Activated naive CD4-positive, alpha-beta T cell treated with anti-CD3 and anti-CD28 coated beads for 36 hours (primary cell): ENCODE measurements at regions of chr7 and their contacts with region 1.

Region 1: GRCh38 chr7:66654123-66654732 is 25.5 kb downstream of the KCTD7 start:
- DNase-seq: peak; percentile 98
- H3K4me3 Mint-ChIP-seq: peak overlapping the region; percentile 95
- H3K27ac Mint-ChIP-seq: peak overlapping the region; percentile 95
- H3K4me1 Mint-ChIP-seq: peaks cover 30% of the 10 kb centered on the region
- H3K27me3 Mint-ChIP-seq: no peaks in the 10 kb centered on the region

Region 2: DNA sequence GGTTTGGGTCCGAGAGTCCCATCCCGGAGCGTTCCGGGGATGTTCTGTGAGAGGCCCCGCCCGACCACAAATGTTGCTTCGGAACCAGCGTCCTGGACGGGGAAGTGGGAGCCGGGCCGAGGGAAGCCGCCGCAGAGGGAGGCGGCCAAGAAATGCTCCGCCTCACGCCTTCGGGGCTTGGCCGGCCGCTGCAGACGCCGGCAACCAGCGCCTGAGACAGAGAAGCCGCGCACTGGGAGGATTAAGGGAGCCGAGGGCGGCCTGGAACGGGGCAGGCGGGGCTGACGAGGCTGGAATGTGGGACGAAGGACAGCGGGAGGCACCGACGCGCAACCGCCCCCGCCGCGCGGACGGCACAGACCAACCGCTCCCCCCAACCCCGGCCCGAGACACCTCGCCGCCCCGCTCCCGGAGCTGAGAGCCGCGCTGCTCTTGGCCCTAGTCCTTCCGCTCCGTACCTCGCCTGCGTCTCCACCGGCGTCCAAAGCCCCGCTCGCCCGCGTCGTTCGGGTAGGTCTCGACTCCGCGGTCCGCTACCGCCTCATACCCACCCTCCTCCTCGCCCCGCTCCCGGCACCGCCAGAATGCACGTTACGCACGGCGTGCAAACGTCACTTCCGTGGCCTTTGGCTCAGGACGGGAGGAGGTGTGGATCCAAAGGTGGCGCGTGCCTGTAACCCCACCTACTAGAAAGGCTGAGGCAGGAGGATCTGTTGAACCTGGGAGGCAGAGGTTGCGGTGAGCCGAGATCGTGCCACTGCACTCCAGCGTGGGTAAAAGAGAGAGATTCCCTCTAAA is 62.2 kb before region 1 on chr7:
- CTCF ChIA-PET with region 1: interaction called, 3 read pairs
- intact Hi-C with region 1: loop called (anchors 1 kb)
- DNase-seq: peak; percentile 96
- H3K4me3 Mint-ChIP-seq: peak overlapping the region; percentile 98
- H3K27ac Mint-ChIP-seq: peak overlapping the region; percentile 96
- H3K4me1 Mint-ChIP-seq: peaks cover 44% of the 10 kb centered on the region
- H3K27me3 Mint-ChIP-seq: no peaks in the 10 kb centered on the region

Region 3: GRCh38 chr7:66669088-66669487 is 14.9 kb after region 1 on chr7:
- CTCF ChIA-PET with region 1: no interaction called
- intact Hi-C with region 1: no loop called
- DNase-seq: no peak
- H3K4me3 Mint-ChIP-seq: no peak overlapping the region
- H3K27ac Mint-ChIP-seq: no peak overlapping the region
- H3K4me1 Mint-ChIP-seq: peaks cover 3% of the 10 kb centered on the region
- H3K27me3 Mint-ChIP-seq: no peaks in the 10 kb centered on the region

Region 4: GRCh38 chr7:66920769-66921395 is 266.7 kb after region 1 on chr7 and contains the start of gene TMEM248:
- CTCF ChIA-PET with region 1: interaction called, 4 read pairs
- intact Hi-C with region 1: loop called (anchors 1 kb)
- DNase-seq: peak; percentile 95
- H3K4me3 Mint-ChIP-seq: peak within 1 kb of the TSS; percentile 100
- H3K27ac Mint-ChIP-seq: peak within 1 kb of the TSS; percentile 96
- H3K4me1 Mint-ChIP-seq: peaks cover 38% of the 10 kb centered on the region
- H3K27me3 Mint-ChIP-seq: no peaks in the 10 kb centered on the region
- total RNA-seq, gene TMEM248: 51.4 to 54.0 TPM